ENCODE measurements at regions of chr5 and their contacts with region 1.

Region 1: DNA sequence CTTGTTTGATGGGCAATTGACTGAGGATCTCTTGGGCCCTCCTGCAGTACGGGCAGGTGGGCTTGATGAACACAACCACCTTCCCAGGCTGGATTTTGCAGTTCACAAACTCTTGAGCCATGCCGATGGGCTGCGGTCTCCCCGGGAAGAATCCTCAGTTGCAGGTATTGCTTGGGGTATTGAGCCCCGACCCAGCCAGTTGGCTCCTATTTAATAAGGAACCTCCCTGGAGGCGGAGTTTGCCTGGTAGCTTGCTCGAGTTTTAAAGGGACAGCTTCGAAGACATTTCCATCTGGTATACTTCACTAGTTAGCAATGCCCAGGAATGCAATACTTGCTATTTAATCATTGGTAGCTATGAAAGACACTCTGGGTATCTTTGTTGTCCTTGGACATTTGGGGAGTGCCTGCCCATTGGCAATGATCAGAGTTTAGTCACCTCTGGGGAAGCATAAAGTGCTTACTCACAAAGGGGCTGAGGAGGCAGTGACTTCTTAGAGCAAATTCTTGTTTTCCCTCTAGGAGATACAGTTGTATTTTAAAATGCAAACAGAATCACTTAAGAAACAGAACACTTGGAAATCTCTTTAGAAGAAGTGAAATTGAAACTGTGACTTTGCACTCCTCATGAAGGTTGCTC is at the start of gene GLRX:
- DNase-seq: peak; percentile 90
- H3K4me3 ChIP-seq: peak within 1 kb of the TSS; percentile 62
- H3K27me3 ChIP-seq: no peaks in the 10 kb centered on the region
- CTCF ChIP-seq: no peak
- polyA plus RNA-seq, gene GLRX: 295 and 431 TPM in 2 replicates

Region 2: GRCh38 chr5:95730730-95731570 is 91.7 kb before region 1 on chr5 and contains the start of gene RHOBTB3:
- CTCF ChIA-PET with region 1: no interaction called
- POLR2A ChIA-PET with region 1: interaction called, 10 read pairs
- DNase-seq: peak; percentile 78
- H3K4me3 ChIP-seq: peak within 1 kb of the TSS; percentile 100
- H3K27me3 ChIP-seq: no peaks in the 10 kb centered on the region
- CTCF ChIP-seq: peak; percentile 20; the same call in 1 of the 2 replicates
- polyA plus RNA-seq, gene RHOBTB3: 288 and 320 TPM in 2 replicates

Region 3: GRCh38 chr5:95846554-95847260 is 24.0 kb after region 1 on chr5:
- CTCF ChIA-PET with region 1: interaction called, 18 read pairs
- POLR2A ChIA-PET with region 1: interaction called, 3 read pairs
- DNase-seq: no peak
- H3K4me3 ChIP-seq: no peak overlapping the region
- H3K27me3 ChIP-seq: no peaks in the 10 kb centered on the region
- CTCF ChIP-seq: peak; percentile 88